ENCODE measurements at regions of chr1 and their contacts with region 1.

Region 1: DNA sequence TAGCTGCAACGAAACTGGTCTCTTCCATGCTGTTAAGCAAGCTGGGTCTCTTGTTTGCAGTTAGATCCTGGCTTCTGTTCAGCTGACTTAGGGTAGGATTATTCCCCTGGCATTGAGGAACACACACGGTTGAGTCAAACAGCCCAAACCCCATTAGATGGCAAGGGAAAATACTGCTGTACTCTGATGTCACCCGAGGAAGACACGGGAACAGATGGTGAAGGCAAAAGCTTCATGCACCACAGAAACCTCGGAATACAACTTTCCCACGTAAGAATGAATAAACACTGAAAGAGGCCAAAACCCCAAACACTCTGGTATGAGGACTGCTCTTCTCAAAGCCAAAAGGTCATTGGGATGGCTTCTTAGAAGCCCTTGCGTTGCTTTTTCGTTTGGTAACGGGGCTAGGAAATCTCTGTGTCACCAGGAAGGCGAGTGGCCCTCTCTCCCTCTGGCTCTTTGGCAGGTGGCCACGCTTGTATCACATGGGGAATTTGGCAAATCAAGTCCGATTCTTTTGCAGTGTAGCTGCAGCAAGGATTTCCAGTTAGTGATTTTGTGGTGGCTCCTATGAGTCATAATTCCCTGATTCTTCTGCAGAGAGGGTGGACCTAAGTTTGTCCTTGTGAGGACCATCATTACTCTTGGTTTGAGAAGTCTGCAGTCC is 16.7 kb upstream of the LYST start:
- DNase-seq: no peak
- H3K4me3 Mint-ChIP-seq: peak overlapping the region; percentile 65
- H3K27ac Mint-ChIP-seq: peak overlapping the region; percentile 79
- H3K4me1 Mint-ChIP-seq: peaks cover 57% of the 10 kb centered on the region
- H3K27me3 Mint-ChIP-seq: no peaks in the 10 kb centered on the region

Region 2: GRCh38 chr1:235821361-235821981 is 61.9 kb before region 1 on chr1:
- intact Hi-C with region 1: no loop called
- DNase-seq: no peak
- H3K4me3 Mint-ChIP-seq: no peak overlapping the region
- H3K27ac Mint-ChIP-seq: no peak overlapping the region
- H3K4me1 Mint-ChIP-seq: peaks cover 17% of the 10 kb centered on the region
- H3K27me3 Mint-ChIP-seq: no peaks in the 10 kb centered on the region

Region 3: DNA sequence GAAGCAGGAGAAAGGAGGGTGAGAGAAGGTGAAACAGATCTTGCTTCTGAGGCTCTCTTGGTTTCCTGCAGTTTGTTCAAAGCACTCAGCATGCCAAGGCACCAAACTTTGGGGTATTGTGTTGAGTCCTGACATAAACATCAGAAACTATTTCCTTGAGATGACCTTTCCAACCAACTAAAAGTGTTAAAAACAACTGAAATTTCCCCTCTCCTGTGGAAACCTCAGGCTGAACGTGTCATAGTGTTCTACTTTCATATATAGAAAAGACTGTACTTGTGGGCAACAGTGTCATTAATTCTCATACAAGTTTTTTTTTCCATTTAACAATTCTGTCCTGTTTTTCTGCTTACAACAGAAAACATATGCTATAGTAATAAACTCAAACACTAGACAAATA is 10.3 kb before region 1 on chr1:
- intact Hi-C with region 1: loop called (anchors 1 kb)
- DNase-seq: peak; percentile 82
- H3K4me3 Mint-ChIP-seq: peak overlapping the region; percentile 66
- H3K27ac Mint-ChIP-seq: peak overlapping the region; percentile 98
- H3K4me1 Mint-ChIP-seq: peaks cover 66% of the 10 kb centered on the region
- H3K27me3 Mint-ChIP-seq: no peaks in the 10 kb centered on the region

Region 4: DNA sequence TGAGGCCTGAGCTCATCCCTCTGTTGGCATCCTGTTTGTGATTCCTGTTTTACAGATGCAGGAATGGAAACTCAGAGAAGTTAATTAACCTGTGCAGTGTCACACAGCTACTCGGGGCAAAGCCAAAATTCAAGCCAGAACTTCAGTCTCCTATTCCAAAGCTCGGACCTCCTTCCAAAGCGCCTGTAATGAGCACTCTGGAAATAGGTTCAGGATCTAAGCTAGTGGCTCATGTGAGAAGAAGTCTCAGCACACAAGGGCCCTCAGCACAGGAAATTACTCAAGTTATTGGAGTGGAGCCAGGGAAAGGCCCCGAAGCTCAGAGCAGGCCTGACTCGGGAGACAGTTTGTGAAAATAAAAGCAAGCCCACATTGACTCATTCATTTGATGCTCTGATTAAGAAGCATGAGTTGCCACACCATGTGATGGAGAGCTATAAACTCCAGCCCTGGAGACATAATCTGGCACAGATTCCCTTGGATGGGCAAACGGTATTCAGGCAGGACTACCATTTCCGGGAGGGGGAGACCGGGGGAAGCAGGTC is 33.9 kb after region 1 on chr1:
- intact Hi-C with region 1: loop called (anchors 1 kb)
- DNase-seq: peak; percentile 78
- H3K4me3 Mint-ChIP-seq: peak overlapping the region; percentile 39
- H3K27ac Mint-ChIP-seq: peak overlapping the region; percentile 82
- H3K4me1 Mint-ChIP-seq: peaks cover 31% of the 10 kb centered on the region
- H3K27me3 Mint-ChIP-seq: no peaks in the 10 kb centered on the region

Region 5: DNA sequence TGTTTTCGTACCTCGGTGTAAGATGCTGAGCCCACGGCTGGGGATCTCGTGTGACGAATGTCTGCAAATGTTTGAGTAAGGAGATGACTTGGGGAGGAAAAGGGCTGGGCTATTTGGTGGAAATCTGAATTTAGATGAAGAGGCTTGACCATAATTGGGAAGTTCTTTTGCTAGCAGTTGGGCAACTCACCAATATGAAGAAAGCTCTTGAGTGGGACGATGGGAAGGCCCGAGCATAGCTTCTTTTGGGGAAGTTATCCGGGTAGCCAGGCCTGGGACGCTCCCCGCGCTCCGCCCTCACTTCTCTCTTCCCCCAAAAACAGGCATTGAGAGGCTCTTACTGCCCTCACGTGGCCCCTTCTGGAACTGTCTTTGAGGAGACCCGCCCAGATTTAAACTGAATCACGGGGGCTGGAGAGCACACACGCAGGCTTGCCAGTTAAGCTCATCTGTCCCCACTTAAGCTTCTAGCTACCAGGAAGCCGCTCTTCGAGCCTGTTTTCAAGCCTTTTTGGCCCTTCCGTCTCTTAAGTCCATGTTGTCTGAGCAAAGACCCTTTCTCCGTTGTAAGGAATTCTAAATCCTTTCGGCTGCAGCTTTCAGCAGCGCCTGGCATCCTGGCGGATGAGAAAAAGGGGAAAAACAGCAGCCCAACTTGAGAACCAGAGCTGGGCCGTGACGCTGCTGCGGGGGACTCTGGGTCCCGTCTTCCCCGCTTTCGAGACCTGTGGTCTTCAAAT is 88.3 kb after region 1 on chr1:
- intact Hi-C with region 1: loop called (anchors 1 kb)
- DNase-seq: peak; percentile 96
- H3K4me3 Mint-ChIP-seq: peak overlapping the region; percentile 77
- H3K27ac Mint-ChIP-seq: peak overlapping the region; percentile 85
- H3K4me1 Mint-ChIP-seq: peaks cover 16% of the 10 kb centered on the region
- H3K27me3 Mint-ChIP-seq: peaks cover 6% of the 10 kb centered on the region